CD8-positive, alpha-beta T cell (primary cell): ENCODE measurements at regions of chr4 and their contacts with region 1.

Region 1: DNA sequence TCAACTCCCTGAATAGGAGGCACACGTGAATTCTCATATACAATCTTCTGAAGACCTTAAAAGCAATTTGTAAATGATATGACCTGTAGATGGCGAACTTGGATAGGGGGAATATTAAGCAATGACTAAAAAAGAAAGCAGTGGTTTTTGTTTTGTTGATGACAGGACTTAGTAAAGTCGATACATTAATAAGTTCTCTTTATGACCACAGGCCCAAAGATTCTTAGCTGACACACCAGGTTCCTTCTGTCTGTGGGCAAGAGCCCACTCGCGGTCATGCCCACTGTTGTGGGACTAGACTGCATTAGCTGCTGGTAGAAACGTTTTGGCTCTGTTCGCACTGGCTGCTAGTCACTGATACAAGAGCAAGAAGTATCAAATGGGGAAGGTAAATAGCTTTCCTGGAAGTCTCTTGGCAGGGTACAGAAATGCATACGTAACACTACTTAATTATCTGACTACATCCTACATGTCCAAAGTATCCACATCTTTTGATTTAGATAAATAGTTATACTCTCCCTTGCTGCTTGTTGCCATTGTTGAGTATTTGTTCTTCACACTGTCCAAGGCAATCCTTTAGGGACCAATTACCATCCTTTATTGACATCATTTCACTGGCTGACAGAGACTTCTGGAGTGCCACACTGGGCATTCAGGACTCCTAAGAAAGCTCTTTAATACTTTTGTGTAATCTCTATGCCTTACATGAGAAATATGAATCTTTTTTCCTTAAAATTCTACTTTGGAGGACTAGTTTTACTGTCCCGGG is 31.0 kb downstream of the ALPK1 start:
- DNase-seq: peak in 2 of 9 experiments; percentile 61 to 68
- ATAC-seq: peak; percentile 52
- H3K4me3 ChIP-seq: peak overlapping the region in 1 of 2 experiments; percentile 26
- H3K4me3 Mint-ChIP-seq: peak overlapping the region; percentile 10
- H3K27ac ChIP-seq: no peak overlapping the region
- H3K27ac Mint-ChIP-seq: no peak overlapping the region
- H3K4me1 ChIP-seq: no peaks in the 10 kb centered on the region
- H3K4me1 Mint-ChIP-seq: no peaks in the 10 kb centered on the region
- H3K27me3 ChIP-seq: no peaks in the 10 kb centered on the region
- H3K27me3 Mint-ChIP-seq: no peaks in the 10 kb centered on the region
- CTCF ChIP-seq: peak; percentile 61

Region 2: GRCh38 chr4:112282860-112283667 is 45.1 kb before region 1 on chr4:
- CTCF ChIA-PET with region 1: no interaction called
- POLR2A ChIA-PET with region 1: no interaction called
- intact Hi-C with region 1: no loop called
- DNase-seq: no peak
- ATAC-seq: no peak
- H3K4me3 ChIP-seq: no peak overlapping the region
- H3K4me3 Mint-ChIP-seq: peak overlapping the region; percentile 56
- H3K27ac ChIP-seq: peak overlapping the region in 1 of 2 experiments; percentile 28
- H3K27ac Mint-ChIP-seq: peak overlapping the region; percentile 75
- H3K4me1 ChIP-seq: peaks cover 21% of the 10 kb centered on the region
- H3K4me1 Mint-ChIP-seq: peaks cover 78% of the 10 kb centered on the region
- H3K27me3 ChIP-seq: no peaks in the 10 kb centered on the region
- H3K27me3 Mint-ChIP-seq: no peaks in the 10 kb centered on the region
- CTCF ChIP-seq: no peak

Region 3: DNA sequence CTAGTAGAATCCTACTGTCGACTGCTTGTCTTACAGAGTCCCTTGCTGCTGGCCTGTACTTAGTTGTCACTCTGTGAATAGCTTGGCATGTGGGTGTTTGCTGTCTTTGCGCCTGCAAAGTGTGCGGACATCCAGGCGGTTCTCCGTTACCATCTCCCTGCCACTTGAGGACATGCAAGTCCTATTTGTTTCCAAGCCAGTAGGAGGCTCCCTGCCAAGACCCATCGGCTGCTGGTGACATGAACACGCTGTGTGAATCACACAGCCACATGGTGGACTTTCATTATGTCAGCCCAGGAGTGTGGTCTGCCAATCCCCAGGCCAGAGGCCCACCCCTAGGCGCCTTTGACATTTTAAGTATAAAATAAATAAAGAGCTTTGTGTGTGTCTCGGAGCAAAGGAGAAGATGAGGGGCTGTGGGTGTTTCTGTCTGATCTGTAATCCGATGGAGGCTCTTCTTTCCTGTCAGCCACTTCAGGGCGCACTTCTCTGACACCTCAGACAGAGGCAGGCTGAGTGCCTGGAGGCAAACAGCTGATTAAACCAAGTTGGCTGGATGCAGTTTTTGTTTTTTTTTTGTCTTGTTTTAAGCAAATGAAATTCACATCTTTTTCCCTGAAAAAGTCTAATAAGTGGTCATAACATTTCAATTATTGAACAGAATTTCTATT is 20.5 kb after region 1 on chr4:
- CTCF ChIA-PET with region 1: no interaction called
- POLR2A ChIA-PET with region 1: no interaction called
- intact Hi-C with region 1: no loop called
- DNase-seq: no peak
- ATAC-seq: no peak
- H3K4me3 ChIP-seq: no peak overlapping the region
- H3K4me3 Mint-ChIP-seq: no peak overlapping the region
- H3K27ac ChIP-seq: no peak overlapping the region
- H3K27ac Mint-ChIP-seq: no peak overlapping the region
- H3K4me1 ChIP-seq: no peaks in the 10 kb centered on the region
- H3K4me1 Mint-ChIP-seq: no peaks in the 10 kb centered on the region
- H3K27me3 ChIP-seq: no peaks in the 10 kb centered on the region
- H3K27me3 Mint-ChIP-seq: no peaks in the 10 kb centered on the region
- CTCF ChIP-seq: no peak

Region 4: GRCh38 chr4:112523764-112524505 is 195.8 kb after region 1 on chr4:
- CTCF ChIA-PET with region 1: interaction called, 28 read pairs
- POLR2A ChIA-PET with region 1: no interaction called
- intact Hi-C with region 1: loop called (anchors 1 to 2 kb)
- DNase-seq: peak; percentile 54 to 88 (median 73)
- ATAC-seq: peak; percentile 83
- H3K4me3 ChIP-seq: peak overlapping the region; percentile 31 to 42
- H3K4me3 Mint-ChIP-seq: peak overlapping the region; percentile 82
- H3K27ac ChIP-seq: no peak overlapping the region
- H3K27ac Mint-ChIP-seq: no peak overlapping the region
- H3K4me1 ChIP-seq: peaks cover 18% of the 10 kb centered on the region
- H3K4me1 Mint-ChIP-seq: peaks cover 33% of the 10 kb centered on the region
- H3K27me3 ChIP-seq: peaks cover 33 to 37% of the 10 kb centered on the region in 2 experiments
- H3K27me3 Mint-ChIP-seq: peaks cover 44% of the 10 kb centered on the region
- CTCF ChIP-seq: peak; percentile 76

Region 5: DNA sequence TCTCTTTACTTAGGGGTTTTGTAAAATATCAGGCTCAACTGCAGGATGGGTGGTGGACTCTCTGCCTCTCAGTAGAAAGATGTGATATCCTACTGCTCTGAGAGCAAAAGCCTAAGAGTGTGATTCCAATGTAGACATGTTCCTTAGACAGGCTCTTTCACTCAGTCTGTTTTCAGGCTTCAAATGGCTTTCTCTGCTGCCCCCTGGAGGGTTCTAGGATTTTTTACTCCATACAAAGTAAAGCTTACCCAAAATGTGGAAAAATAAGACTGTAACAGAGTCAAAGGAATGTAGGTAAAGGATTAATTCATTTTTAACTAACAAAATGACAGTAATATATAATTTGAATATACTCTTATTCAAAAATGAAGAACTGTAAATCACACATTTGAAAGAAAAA is 276.4 kb after region 1 on chr4:
- CTCF ChIA-PET with region 1: interaction called, 30 read pairs
- POLR2A ChIA-PET with region 1: no interaction called
- intact Hi-C with region 1: loop called (anchors 1 to 2 kb)
- DNase-seq: peak in 6 of 9 experiments; percentile 14 to 55 (median 40)
- ATAC-seq: peak; percentile 59
- H3K4me3 ChIP-seq: no peak overlapping the region
- H3K4me3 Mint-ChIP-seq: no peak overlapping the region
- H3K27ac ChIP-seq: no peak overlapping the region
- H3K27ac Mint-ChIP-seq: no peak overlapping the region
- H3K4me1 ChIP-seq: no peaks in the 10 kb centered on the region
- H3K4me1 Mint-ChIP-seq: no peaks in the 10 kb centered on the region
- H3K27me3 ChIP-seq: no peaks in the 10 kb centered on the region
- H3K27me3 Mint-ChIP-seq: no peaks in the 10 kb centered on the region
- CTCF ChIP-seq: peak; percentile 49

Region 6: DNA sequence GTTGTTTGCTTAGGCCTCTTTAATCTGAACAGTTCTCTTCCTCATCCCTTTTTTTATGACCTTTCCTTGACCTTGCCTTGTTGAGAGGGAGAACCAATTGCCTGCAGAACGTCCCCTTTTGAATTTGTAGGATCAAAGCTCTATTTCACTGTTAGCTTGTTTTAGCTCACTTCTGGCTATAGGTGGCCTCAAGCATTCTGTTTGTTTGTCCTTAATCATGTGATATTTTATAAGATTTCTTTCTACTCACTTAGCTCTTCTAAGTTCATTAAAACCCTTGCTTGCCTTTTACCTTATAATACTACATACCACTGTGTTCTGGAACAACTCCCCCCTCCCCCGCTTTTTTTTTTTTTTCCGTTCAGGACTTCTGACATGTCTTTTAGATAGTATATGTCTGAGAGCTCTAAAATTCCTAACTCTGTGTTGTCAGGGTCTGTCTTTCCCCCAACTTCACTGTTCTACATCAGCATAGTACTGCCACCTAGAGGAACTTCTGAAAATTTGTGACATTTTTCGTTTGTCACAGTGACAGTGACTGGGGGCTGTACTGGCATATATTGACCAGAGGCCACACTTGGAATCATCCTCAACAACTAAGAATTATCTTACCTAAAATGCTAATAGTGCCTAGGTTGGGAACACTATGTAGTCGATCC is 437.3 kb after region 1 on chr4:
- CTCF ChIA-PET with region 1: no interaction called
- POLR2A ChIA-PET with region 1: no interaction called
- intact Hi-C with region 1: loop called in 1 of 2 experiments (anchors 5 kb)
- DNase-seq: peak in 2 of 9 experiments; percentile 18 to 32
- ATAC-seq: no peak
- H3K4me3 ChIP-seq: no peak overlapping the region
- H3K4me3 Mint-ChIP-seq: no peak overlapping the region
- H3K27ac ChIP-seq: no peak overlapping the region
- H3K27ac Mint-ChIP-seq: no peak overlapping the region
- H3K4me1 ChIP-seq: no peaks in the 10 kb centered on the region
- H3K4me1 Mint-ChIP-seq: no peaks in the 10 kb centered on the region
- H3K27me3 ChIP-seq: no peaks in the 10 kb centered on the region
- H3K27me3 Mint-ChIP-seq: peaks cover 9% of the 10 kb centered on the region
- CTCF ChIP-seq: peak; percentile 42

Region 7: GRCh38 chr4:112946127-112946526 is 618.0 kb after region 1 on chr4:
- CTCF ChIA-PET with region 1: no interaction called
- POLR2A ChIA-PET with region 1: no interaction called
- intact Hi-C with region 1: loop called (anchors 5 kb)
- DNase-seq: no peak
- ATAC-seq: no peak
- H3K4me3 ChIP-seq: no peak overlapping the region
- H3K4me3 Mint-ChIP-seq: no peak overlapping the region
- H3K27ac ChIP-seq: no peak overlapping the region
- H3K27ac Mint-ChIP-seq: no peak overlapping the region
- H3K4me1 ChIP-seq: no peaks in the 10 kb centered on the region
- H3K4me1 Mint-ChIP-seq: no peaks in the 10 kb centered on the region
- H3K27me3 ChIP-seq: no peaks in the 10 kb centered on the region
- H3K27me3 Mint-ChIP-seq: peaks cover 4% of the 10 kb centered on the region
- CTCF ChIP-seq: no peak

Region 8: DNA sequence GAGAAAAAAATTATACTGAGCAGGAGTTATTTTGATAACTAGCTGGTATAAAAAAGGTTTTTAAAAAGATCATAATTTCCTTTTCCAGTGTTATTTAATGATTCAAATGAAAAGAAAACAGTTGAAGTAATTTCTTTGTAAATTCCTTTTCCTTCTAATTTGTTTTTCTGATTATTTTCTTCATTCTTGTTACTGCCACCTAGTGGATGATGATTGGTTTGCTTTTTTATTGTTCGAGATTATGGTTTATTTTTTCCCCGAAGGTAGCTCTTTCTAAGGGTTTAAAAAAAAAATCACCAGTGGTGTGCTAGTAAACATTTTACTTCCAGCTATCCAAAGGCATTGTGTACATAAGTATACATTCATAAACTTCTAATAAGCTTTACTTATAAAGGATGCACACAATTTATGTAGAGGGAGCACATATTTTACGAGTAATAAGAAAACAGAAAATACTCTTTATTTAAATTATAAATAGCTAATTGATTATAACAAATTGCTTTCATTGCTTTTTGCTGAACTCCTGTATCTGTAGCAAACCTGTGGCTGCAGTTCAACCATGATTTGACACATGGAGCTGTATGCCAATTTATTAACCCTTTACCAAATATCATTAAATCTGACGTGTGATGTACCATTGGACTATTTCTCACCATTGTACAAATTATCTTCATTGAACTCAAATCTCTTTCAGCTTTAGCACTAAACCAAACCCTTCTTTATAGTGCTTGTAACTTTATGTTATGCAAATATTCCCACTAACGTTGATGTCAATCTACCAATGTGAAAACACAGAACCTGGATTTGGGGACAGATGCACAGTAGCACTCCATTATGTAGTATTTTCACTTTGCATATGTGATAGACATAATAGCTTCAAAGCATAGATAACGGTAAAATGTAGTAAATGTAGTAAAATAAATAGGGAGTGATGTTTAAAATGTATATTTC is 623.5 kb after region 1 on chr4:
- CTCF ChIA-PET with region 1: no interaction called
- POLR2A ChIA-PET with region 1: no interaction called
- intact Hi-C with region 1: loop called (anchors 5 kb)
- DNase-seq: peak in 2 of 9 experiments; percentile 1 to 5
- ATAC-seq: no peak
- H3K4me3 ChIP-seq: no peak overlapping the region
- H3K4me3 Mint-ChIP-seq: no peak overlapping the region
- H3K27ac ChIP-seq: no peak overlapping the region
- H3K27ac Mint-ChIP-seq: no peak overlapping the region
- H3K4me1 ChIP-seq: no peaks in the 10 kb centered on the region
- H3K4me1 Mint-ChIP-seq: no peaks in the 10 kb centered on the region
- H3K27me3 ChIP-seq: peaks cover 0 to 3% of the 10 kb centered on the region in 2 experiments
- H3K27me3 Mint-ChIP-seq: peaks cover 11% of the 10 kb centered on the region
- CTCF ChIP-seq: peak; percentile 58